IMR-90 (cell line): ENCODE measurements at regions of chr13 and their contacts with region 1.

Region 1: GRCh38 chr13:23375001-23375971 is 58.2 kb downstream of the SACS start:
- DNase-seq: peak; percentile 92
- ATAC-seq: peak; percentile 89
- H3K4me3 ChIP-seq: peak overlapping the region; percentile 97
- H3K27ac ChIP-seq: peak overlapping the region; percentile 99
- H3K4me1 ChIP-seq: peaks cover 26% of the 10 kb centered on the region
- H3K27me3 ChIP-seq: no peaks in the 10 kb centered on the region
- CTCF ChIP-seq: 0 out of 2 replicates have a peak, but pooled peaks have one; percentile 19
- POLR2A ChIP-seq: peak; percentile 82
- RAD21 ChIP-seq: no peak

Region 2: GRCh38 chr13:23427342-23427843 is 52.1 kb after region 1 on chr13:
- CTCF ChIA-PET with region 1: interaction called, 9 read pairs
- POLR2A ChIA-PET with region 1: no interaction called
- dilution Hi-C with region 1: no loop called
- in situ Hi-C with region 1: no loop called
- intact Hi-C with region 1: loop called (anchors 2 kb)
- DNase-seq: peak; percentile 97
- ATAC-seq: peak; percentile 89
- H3K4me3 ChIP-seq: no peak overlapping the region
- H3K27ac ChIP-seq: peak overlapping the region; percentile 67
- H3K4me1 ChIP-seq: peaks cover 17% of the 10 kb centered on the region
- H3K27me3 ChIP-seq: no peaks in the 10 kb centered on the region
- CTCF ChIP-seq: no peak
- POLR2A ChIP-seq: no peak
- RAD21 ChIP-seq: no peak

Region 3: GRCh38 chr13:23570099-23570920 is 195.0 kb after region 1 on chr13 and contains the start of gene TNFRSF19:
- CTCF ChIA-PET with region 1: no interaction called
- POLR2A ChIA-PET with region 1: no interaction called
- dilution Hi-C with region 1: no loop called
- in situ Hi-C with region 1: no loop called
- intact Hi-C with region 1: loop called (anchors 5 kb)
- DNase-seq: peak; percentile 91
- ATAC-seq: peak; percentile 84
- H3K4me3 ChIP-seq: peak within 1 kb of the TSS; percentile 53
- H3K27ac ChIP-seq: peak within 1 kb of the TSS; percentile 48
- H3K4me1 ChIP-seq: peaks cover 2% of the 10 kb centered on the region; the same call in 1 of the 2 replicates
- H3K27me3 ChIP-seq: no peaks in the 10 kb centered on the region
- CTCF ChIP-seq: no peak
- POLR2A ChIP-seq: no peak
- RAD21 ChIP-seq: no peak
- total RNA-seq, gene TNFRSF19: 18.6 and 21.9 TPM in 2 replicates

Region 4: GRCh38 chr13:23794267-23795161 is 419.2 kb after region 1 on chr13:
- CTCF ChIA-PET with region 1: no interaction called
- POLR2A ChIA-PET with region 1: no interaction called
- dilution Hi-C with region 1: no loop called
- in situ Hi-C with region 1: no loop called
- intact Hi-C with region 1: loop called (anchors 10 kb)
- DNase-seq: peak; percentile 85
- ATAC-seq: peak; percentile 24
- H3K4me3 ChIP-seq: no peak overlapping the region
- H3K27ac ChIP-seq: peak overlapping the region; percentile 98
- H3K4me1 ChIP-seq: peaks cover 27% of the 10 kb centered on the region
- H3K27me3 ChIP-seq: no peaks in the 10 kb centered on the region
- CTCF ChIP-seq: no peak
- POLR2A ChIP-seq: no peak
- RAD21 ChIP-seq: no peak

Region 5: GRCh38 chr13:23899555-23899954 is 524.3 kb after region 1 on chr13:
- CTCF ChIA-PET with region 1: no interaction called
- POLR2A ChIA-PET with region 1: no interaction called
- dilution Hi-C with region 1: no loop called
- in situ Hi-C with region 1: loop called (anchors 25 kb)
- intact Hi-C with region 1: loop called (anchors 5 kb)
- DNase-seq: peak; percentile 74
- ATAC-seq: peak; percentile 51
- H3K4me3 ChIP-seq: no peak overlapping the region
- H3K27ac ChIP-seq: peak overlapping the region; percentile 78; the same call in 1 of the 2 replicates
- H3K4me1 ChIP-seq: peaks cover 14% of the 10 kb centered on the region
- H3K27me3 ChIP-seq: no peaks in the 10 kb centered on the region
- CTCF ChIP-seq: peak; percentile 74
- POLR2A ChIP-seq: no peak
- RAD21 ChIP-seq: peak; percentile 68